ENCODE measurements at regions of chr4 and their contacts with region 1.

Region 1: GRCh38 chr4:55321707-55322264 is 24.3 kb upstream of the SRD5A3 start:
- DNase-seq: peak; percentile 70
- H3K4me3 ChIP-seq: no peak overlapping the region
- H3K27ac ChIP-seq: no peak overlapping the region
- H3K4me1 ChIP-seq: no peaks in the 10 kb centered on the region
- H3K27me3 ChIP-seq: no peaks in the 10 kb centered on the region
- CTCF ChIP-seq: peak; percentile 34 to 69 (median 62)
- POLR2A ChIP-seq: no peak

Region 2: DNA sequence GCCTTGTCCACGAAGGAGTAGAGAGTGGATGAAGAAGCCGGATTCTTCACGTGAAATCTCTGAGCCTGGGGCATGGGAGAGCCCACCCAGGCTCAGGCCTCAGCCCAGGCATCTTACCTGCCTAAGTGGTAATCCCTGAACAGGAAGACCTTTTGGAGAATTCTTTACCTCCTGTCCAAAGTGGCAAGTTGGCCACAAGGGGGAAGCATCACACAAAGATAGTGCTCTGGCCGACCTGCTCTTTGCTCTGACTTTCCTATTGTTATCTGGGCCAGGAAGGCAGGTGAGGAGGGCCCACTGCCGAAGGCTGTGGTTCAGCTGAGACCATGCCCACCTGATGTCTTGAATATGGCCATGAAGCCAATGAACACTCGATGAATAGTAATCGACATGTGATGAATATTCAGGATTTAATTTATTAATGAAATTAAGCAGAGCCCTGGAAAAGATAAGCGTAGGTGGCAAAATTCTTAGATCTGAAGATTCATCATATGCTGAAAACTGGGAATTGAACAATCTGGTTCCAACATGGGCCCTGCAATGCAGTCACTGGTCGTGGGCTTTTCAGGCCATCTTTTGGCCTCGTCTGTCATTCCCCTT is 998.9 kb before region 1 on chr4:
- intact Hi-C with region 1: loop called (anchors 10 kb)
- DNase-seq: peak; percentile 60
- H3K4me3 ChIP-seq: no peak overlapping the region
- H3K27ac ChIP-seq: no peak overlapping the region
- H3K4me1 ChIP-seq: no peaks in the 10 kb centered on the region
- H3K27me3 ChIP-seq: no peaks in the 10 kb centered on the region
- CTCF ChIP-seq: peak in 3 of 4 experiments; percentile 58 to 75 (median 72)
- POLR2A ChIP-seq: no peak

Region 3: DNA sequence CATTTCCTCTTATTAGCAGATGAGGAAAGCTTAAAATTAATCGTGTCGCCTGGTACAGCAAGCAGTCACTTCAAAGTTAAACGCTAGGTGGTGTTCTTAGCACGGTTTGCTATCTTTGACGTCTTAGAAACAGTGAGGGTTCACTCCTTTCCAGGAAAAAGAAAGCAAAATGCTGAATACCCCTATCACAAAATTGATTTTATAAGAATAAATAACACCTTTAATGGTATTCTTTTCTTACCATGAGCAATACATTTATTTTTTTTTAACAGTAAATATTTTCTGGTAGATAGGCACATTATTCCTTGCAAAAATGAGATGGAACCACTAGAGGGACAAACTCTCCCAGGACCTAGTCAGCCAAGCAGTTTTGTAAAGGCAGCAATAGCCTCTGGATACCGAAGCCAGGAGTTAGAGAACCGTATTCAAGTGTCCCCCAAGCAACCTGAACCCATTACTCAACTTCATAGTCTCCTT is 350.3 kb before region 1 on chr4:
- intact Hi-C with region 1: loop called (anchors 2 kb)
- DNase-seq: no peak
- H3K4me3 ChIP-seq: no peak overlapping the region
- H3K27ac ChIP-seq: no peak overlapping the region
- H3K4me1 ChIP-seq: no peaks in the 10 kb centered on the region
- H3K27me3 ChIP-seq: no peaks in the 10 kb centered on the region
- CTCF ChIP-seq: peak; percentile 35 to 65 (median 49)
- POLR2A ChIP-seq: no peak

Region 4: DNA sequence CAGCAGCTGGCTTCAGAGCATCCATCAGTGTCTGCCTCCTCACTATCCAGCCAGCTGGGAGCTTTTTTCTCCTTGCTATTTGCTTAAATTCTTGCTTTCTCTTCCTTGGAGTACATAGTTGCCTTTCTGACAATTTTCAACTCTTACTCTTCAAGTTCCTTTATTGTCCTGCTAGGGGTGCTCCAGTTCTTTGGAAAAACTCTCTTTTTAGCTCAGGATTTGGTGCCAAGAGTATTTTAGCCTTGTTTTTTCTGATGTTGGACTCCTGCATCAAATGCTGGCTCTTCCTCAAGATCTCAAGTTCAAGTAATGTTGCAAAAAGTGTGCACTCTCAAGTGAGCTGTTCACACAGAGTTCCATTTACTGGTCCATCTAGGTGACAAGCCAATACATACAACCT is 322.8 kb before region 1 on chr4:
- intact Hi-C with region 1: loop called (anchors 2 kb)
- DNase-seq: no peak
- H3K4me3 ChIP-seq: no peak overlapping the region
- H3K27ac ChIP-seq: no peak overlapping the region
- H3K4me1 ChIP-seq: no peaks in the 10 kb centered on the region
- H3K27me3 ChIP-seq: no peaks in the 10 kb centered on the region
- CTCF ChIP-seq: peak in 1 of 4 experiments; percentile 59
- POLR2A ChIP-seq: no peak

Region 5: GRCh38 chr4:55125087-55125721 is 196.6 kb before region 1 on chr4 and contains the start of gene KDR:
- intact Hi-C with region 1: loop called (anchors 5 kb)
- DNase-seq: peak; percentile 17
- H3K4me3 ChIP-seq: peak within 1 kb of the TSS; percentile 45 to 49
- H3K27ac ChIP-seq: peak within 1 kb of the TSS; percentile 29 to 32
- H3K4me1 ChIP-seq: no peaks in the 10 kb centered on the region
- H3K27me3 ChIP-seq: no peaks in the 10 kb centered on the region
- CTCF ChIP-seq: no peak
- POLR2A ChIP-seq: peak; percentile 25
- total RNA-seq, gene KDR: 22.7 to 23.5 TPM

Region 6: DNA sequence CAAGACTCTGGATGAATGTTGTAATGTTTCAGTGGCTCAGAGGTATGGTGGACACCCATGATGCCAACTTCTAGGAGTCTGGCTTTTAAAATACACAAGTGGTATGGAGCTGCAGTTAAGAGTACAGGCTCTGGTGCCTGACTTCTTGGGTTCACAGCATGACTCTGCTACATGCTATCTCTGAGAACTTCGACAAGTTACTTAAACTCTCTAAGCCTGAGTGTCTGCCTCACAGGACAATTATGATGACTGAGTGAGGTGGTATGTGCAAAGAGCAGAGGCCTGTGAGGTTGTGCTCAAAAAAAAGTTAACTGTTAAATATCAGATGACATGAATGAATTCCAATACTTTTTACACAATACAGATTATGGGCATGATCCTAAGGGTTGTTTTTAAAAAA is 66.6 kb before region 1 on chr4:
- intact Hi-C with region 1: no loop called
- DNase-seq: no peak
- H3K4me3 ChIP-seq: no peak overlapping the region
- H3K27ac ChIP-seq: no peak overlapping the region
- H3K4me1 ChIP-seq: no peaks in the 10 kb centered on the region
- H3K27me3 ChIP-seq: no peaks in the 10 kb centered on the region
- CTCF ChIP-seq: no peak
- POLR2A ChIP-seq: no peak